Prostate gland (tissue), 2 donors: ENCODE measurements at regions of chr2 and their contacts with region 1.

Region 1: DNA sequence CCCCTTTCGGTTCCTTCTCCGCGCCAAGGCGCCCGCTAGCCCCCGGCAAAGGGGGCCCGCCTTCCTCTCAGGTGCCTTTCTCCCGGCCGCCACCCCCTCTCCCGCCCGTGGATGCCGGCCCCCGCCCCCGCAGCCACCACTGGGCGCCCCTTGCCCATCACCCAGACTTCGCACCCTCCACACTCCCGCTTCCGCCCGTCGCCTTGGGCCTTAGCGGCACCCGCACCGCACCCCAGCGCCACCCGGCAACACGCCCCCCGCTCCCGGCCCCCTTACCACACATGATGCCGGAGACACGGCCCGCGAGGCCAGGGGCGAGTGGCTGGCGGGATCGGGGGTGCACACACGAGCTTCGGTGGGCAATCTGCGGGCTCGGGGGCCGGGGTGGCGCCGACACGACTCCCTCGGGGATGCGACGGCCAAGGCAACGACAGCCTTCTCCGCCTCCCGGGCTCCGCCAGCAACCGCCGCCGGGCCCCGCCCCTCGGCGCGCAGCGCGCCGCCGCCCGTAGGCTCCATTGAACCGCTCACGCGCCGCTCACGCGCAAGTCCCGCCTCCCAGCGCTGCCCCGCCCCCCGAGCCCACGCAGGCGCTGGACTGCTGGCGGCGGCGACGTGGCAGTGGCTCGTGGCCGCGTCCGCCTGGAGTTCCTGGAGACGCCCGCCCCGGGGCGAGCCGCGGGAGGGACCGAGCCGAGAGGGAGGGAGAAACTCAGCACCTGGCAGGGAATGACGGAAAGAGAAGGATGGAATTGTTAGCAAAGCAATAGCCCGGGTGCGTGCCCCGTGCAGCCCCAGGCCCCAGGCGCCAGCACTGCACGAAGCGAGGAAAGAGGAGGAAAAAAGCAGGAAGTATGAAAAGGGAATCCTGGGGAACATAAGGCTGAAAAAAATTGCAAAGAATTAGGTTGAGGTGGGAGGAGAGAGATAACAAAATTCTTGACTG is at the start of gene GFPT1:
- DNase-seq: peak; percentile 94
- H3K4me3 ChIP-seq: peak within 1 kb of the TSS; percentile 67 to 99
- H3K27ac ChIP-seq: peak within 1 kb of the TSS; percentile 84 to 93
- H3K4me1 ChIP-seq: peaks cover 2% of the 10 kb centered on the region
- H3K27me3 ChIP-seq: no peaks in the 10 kb centered on the region
- CTCF ChIP-seq: peak in 2 of 4 experiments; percentile 10 to 36
- POLR2A ChIP-seq: peak; percentile 93
- total RNA-seq, gene GFPT1: 27.4 to 52.7 TPM

Region 2: GRCh38 chr2:69436938-69437750 is 50.1 kb after region 1 on chr2 and contains the start of gene NFU1:
- intact Hi-C with region 1: loop called (anchors 5 kb)
- DNase-seq: peak; percentile 83
- H3K4me3 ChIP-seq: peak within 1 kb of the TSS; percentile 65 to 78
- H3K27ac ChIP-seq: peak within 1 kb of the TSS; percentile 96 to 98
- H3K4me1 ChIP-seq: no peaks in the 10 kb centered on the region
- H3K27me3 ChIP-seq: no peaks in the 10 kb centered on the region
- CTCF ChIP-seq: peak; percentile 28 to 78 (median 58)
- POLR2A ChIP-seq: peak; percentile 79
- total RNA-seq, gene NFU1: 33.4 to 42.0 TPM

Region 3: GRCh38 chr2:69643602-69644505 is 256.8 kb after region 1 on chr2 and contains the start of gene AAK1:
- intact Hi-C with region 1: loop called (anchors 5 kb)
- DNase-seq: peak; percentile 90
- H3K4me3 ChIP-seq: peak within 1 kb of the TSS; percentile 90 to 94
- H3K27ac ChIP-seq: peak within 1 kb of the TSS; percentile 97
- H3K4me1 ChIP-seq: peaks cover 7% of the 10 kb centered on the region
- H3K27me3 ChIP-seq: no peaks in the 10 kb centered on the region
- CTCF ChIP-seq: peak in 2 of 4 experiments; percentile 14 to 15
- POLR2A ChIP-seq: peak; percentile 81
- total RNA-seq, gene AAK1: 70.7 to 77.3 TPM